Uterus (tissue), 4 donors: ENCODE measurements at regions of chr12 and their contacts with region 1.

Region 1: GRCh38 chr12:12319451-12320183 is 30.4 kb downstream of the MANSC1 start:
- DNase-seq: peak; percentile 30 to 57
- H3K4me3 ChIP-seq: peak overlapping the region in 1 of 2 donors; percentile 12
- H3K27ac ChIP-seq: peak overlapping the region; percentile 84 to 87
- H3K4me1 ChIP-seq: no peaks in the 10 kb centered on the region
- H3K27me3 ChIP-seq: no peaks in the 10 kb centered on the region
- CTCF ChIP-seq: no peak
- POLR2A ChIP-seq: no peak

Region 2: GRCh38 chr12:12266873-12267741 is 52.5 kb before region 1 on chr12 and contains the start of gene LRP6:
- intact Hi-C with region 1: loop called (anchors 5 kb)
- DNase-seq: peak; percentile 90
- H3K4me3 ChIP-seq: peak within 1 kb of the TSS; percentile 80 to 85
- H3K27ac ChIP-seq: peak within 1 kb of the TSS; percentile 98 to 100
- H3K4me1 ChIP-seq: no peaks in the 10 kb centered on the region
- H3K27me3 ChIP-seq: no peaks in the 10 kb centered on the region
- CTCF ChIP-seq: no peak
- POLR2A ChIP-seq: peak; percentile 64 to 84
- total RNA-seq, gene LRP6: 18.7 to 141 (median 50.1) TPM

Region 3: GRCh38 chr12:12294215-12295005 is 25.2 kb before region 1 on chr12:
- intact Hi-C with region 1: no loop called
- DNase-seq: peak in 1 of 2 donors; percentile 44
- H3K4me3 ChIP-seq: no peak overlapping the region
- H3K27ac ChIP-seq: peak overlapping the region; percentile 33 to 68
- H3K4me1 ChIP-seq: peaks cover 0 to 5% of the 10 kb centered on the region in 2 donors
- H3K27me3 ChIP-seq: no peaks in the 10 kb centered on the region
- CTCF ChIP-seq: no peak
- POLR2A ChIP-seq: no peak

Region 4: GRCh38 chr12:12415886-12416285 is 96.3 kb after region 1 on chr12:
- intact Hi-C with region 1: no loop called
- DNase-seq: no peak
- H3K4me3 ChIP-seq: no peak overlapping the region
- H3K27ac ChIP-seq: no peak overlapping the region
- H3K4me1 ChIP-seq: no peaks in the 10 kb centered on the region
- H3K27me3 ChIP-seq: no peaks in the 10 kb centered on the region
- CTCF ChIP-seq: no peak
- POLR2A ChIP-seq: no peak